Activated B cell treated with CpG ODN at 0.5 μM for 24 hours (primary cell): ENCODE measurements at regions of chr5 and their contacts with region 1.

Region 1: DNA sequence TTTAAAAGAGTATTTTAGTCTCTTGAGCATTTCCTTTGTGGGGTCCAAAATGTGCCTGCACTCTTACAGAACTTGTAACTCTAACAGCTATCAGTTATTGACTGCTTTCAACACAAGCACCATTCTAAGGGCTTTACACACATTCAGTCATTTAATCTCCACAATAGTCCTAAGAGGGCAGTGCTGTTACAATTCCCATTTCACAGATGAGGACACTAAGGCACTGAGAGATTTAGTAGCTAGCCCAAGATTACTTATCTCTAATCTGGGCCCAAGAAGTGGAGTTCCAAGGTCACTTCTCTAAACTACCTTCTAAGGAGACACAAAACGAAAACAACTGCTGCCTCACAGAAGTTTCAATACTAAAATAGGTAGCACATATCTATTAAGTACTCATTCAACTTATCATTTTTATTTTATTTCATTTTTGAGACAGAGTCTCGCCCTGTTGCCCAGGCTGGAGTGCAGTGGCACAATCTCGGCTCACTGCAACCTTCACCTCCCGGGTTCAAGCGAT is 275.2 kb downstream of the CWC27 start:
- DNase-seq: no peak
- ATAC-seq: no peak
- H3K4me3 Mint-ChIP-seq: no peak overlapping the region
- H3K27ac Mint-ChIP-seq: no peak overlapping the region
- H3K4me1 Mint-ChIP-seq: peaks cover 5% of the 10 kb centered on the region
- H3K27me3 Mint-ChIP-seq: no peaks in the 10 kb centered on the region
- CTCF ChIP-seq: no peak

Region 2: GRCh38 chr5:64397552-64397951 is 646.3 kb before region 1 on chr5:
- CTCF ChIA-PET with region 1: no interaction called
- POLR2A ChIA-PET with region 1: no interaction called
- intact Hi-C with region 1: no loop called
- DNase-seq: no peak
- ATAC-seq: no peak
- H3K4me3 Mint-ChIP-seq: no peak overlapping the region
- H3K27ac Mint-ChIP-seq: no peak overlapping the region
- H3K4me1 Mint-ChIP-seq: no peaks in the 10 kb centered on the region
- H3K27me3 Mint-ChIP-seq: no peaks in the 10 kb centered on the region
- CTCF ChIP-seq: no peak

Region 3: DNA sequence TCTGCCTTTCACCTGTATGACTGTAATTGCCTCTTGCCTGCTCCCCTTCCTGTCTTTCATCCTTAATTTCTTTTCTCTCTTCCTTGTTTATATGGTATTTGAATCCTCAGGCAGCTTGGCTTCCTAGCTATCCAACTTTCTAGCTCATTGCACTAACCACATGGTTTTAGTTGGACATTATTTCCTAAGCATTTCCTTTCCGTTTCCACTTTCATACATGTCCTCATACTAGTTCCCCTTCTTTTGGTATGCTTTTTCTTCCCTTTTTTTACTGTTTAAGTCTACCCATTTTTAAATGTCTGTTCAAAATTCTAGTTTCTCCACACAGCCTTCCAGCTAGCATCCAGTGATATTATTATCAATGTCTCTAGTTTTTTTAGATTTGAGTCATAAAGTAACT is 268.6 kb before region 1 on chr5:
- CTCF ChIA-PET with region 1: no interaction called
- POLR2A ChIA-PET with region 1: no interaction called
- intact Hi-C with region 1: no loop called
- DNase-seq: no peak
- ATAC-seq: no peak
- H3K4me3 Mint-ChIP-seq: no peak overlapping the region
- H3K27ac Mint-ChIP-seq: no peak overlapping the region
- H3K4me1 Mint-ChIP-seq: peaks cover 27% of the 10 kb centered on the region
- H3K27me3 Mint-ChIP-seq: no peaks in the 10 kb centered on the region
- CTCF ChIP-seq: no peak

Region 4: GRCh38 chr5:65021527-65022226 is 22.2 kb before region 1 on chr5:
- CTCF ChIA-PET with region 1: no interaction called
- POLR2A ChIA-PET with region 1: no interaction called
- intact Hi-C with region 1: no loop called
- DNase-seq: no peak
- ATAC-seq: peak; percentile 37
- H3K4me3 Mint-ChIP-seq: no peak overlapping the region
- H3K27ac Mint-ChIP-seq: no peak overlapping the region
- H3K4me1 Mint-ChIP-seq: peaks cover 25% of the 10 kb centered on the region
- H3K27me3 Mint-ChIP-seq: no peaks in the 10 kb centered on the region
- CTCF ChIP-seq: no peak

Region 5: GRCh38 chr5:65061250-65061973 is 17.5 kb after region 1 on chr5:
- CTCF ChIA-PET with region 1: no interaction called
- POLR2A ChIA-PET with region 1: interaction called, 8 read pairs
- intact Hi-C with region 1: loop called (anchors 2 kb)
- DNase-seq: peak; percentile 23
- ATAC-seq: peak; percentile 72
- H3K4me3 Mint-ChIP-seq: peak overlapping the region; percentile 36
- H3K27ac Mint-ChIP-seq: peak overlapping the region; percentile 80
- H3K4me1 Mint-ChIP-seq: peaks cover 60% of the 10 kb centered on the region
- H3K27me3 Mint-ChIP-seq: no peaks in the 10 kb centered on the region
- CTCF ChIP-seq: no peak